CD4-positive, alpha-beta T cell (primary cell): ENCODE measurements at regions of chr12 and their contacts with region 1.

Region 1: GRCh38 chr12:52645120-52645761 is 6.8 kb downstream of the KRT2 start:
- DNase-seq: peak; percentile 29 to 91 (median 50)
- ATAC-seq: peak; percentile 89
- H3K4me3 ChIP-seq: no peak overlapping the region
- H3K4me3 Mint-ChIP-seq: peak overlapping the region; percentile 77
- H3K27ac ChIP-seq: peak overlapping the region; percentile 44 to 75
- H3K27ac Mint-ChIP-seq: peak overlapping the region; percentile 99
- H3K4me1 ChIP-seq: peaks cover 76% of the 10 kb centered on the region
- H3K4me1 Mint-ChIP-seq: peaks cover 92% of the 10 kb centered on the region
- H3K27me3 ChIP-seq: no peaks in the 10 kb centered on the region
- H3K27me3 Mint-ChIP-seq: no peaks in the 10 kb centered on the region
- CTCF ChIP-seq: no peak

Region 2: DNA sequence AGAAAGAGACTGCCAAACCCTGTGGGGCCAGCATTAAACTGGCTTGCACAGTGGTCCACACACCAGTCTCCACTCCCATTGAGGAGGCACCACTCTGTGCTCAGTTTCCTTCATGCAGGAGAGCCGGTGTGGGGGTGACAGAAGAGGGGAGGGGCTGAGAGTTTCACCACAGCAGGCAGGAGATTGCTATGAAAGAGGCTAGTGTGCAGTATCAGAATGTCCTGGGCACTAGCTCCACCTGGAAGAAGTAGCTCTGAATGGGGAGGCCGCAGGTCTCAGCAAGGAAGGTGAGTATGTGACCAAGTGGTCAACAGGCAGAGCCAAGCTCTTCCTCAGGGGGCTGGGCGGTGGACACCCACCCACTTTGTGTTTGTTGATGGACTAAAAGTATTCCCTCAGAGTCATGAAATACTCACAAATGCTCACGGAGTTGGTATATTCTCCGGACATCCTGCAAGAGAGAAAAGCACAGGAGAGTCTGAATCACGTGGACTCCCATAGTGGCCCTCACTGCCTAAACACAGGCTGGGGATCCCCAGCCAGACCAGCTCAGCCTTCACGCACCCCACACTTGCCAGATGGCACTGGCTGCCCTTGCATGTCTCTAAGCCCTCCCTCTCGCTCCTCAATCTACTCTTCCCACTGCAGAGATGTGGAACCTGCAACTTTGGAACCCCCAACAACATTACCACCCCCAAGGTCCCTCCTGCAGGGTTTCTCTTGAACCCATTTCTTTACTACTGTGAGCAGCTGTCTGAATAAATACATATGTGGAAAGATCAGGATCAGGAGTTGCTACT is 36.2 kb before region 1 on chr12:
- CTCF ChIA-PET with region 1: no interaction called
- POLR2A ChIA-PET with region 1: interaction called, 50 read pairs
- intact Hi-C with region 1: loop called (anchors 1 to 2 kb)
- DNase-seq: peak in 2 of 14 experiments; percentile 20 to 46
- ATAC-seq: no peak
- H3K4me3 ChIP-seq: no peak overlapping the region
- H3K4me3 Mint-ChIP-seq: peak overlapping the region; percentile 40
- H3K27ac ChIP-seq: peak overlapping the region in 1 of 2 donors; percentile 38
- H3K27ac Mint-ChIP-seq: peak overlapping the region; percentile 89
- H3K4me1 ChIP-seq: peaks cover 84% of the 10 kb centered on the region
- H3K4me1 Mint-ChIP-seq: peaks cover 97% of the 10 kb centered on the region
- H3K27me3 ChIP-seq: no peaks in the 10 kb centered on the region
- H3K27me3 Mint-ChIP-seq: no peaks in the 10 kb centered on the region
- CTCF ChIP-seq: no peak

Region 3: GRCh38 chr12:52634266-52635056 is 10.8 kb before region 1 on chr12:
- CTCF ChIA-PET with region 1: no interaction called
- POLR2A ChIA-PET with region 1: interaction called, 22 read pairs
- intact Hi-C with region 1: loop called in 1 of 2 experiments (anchors 1 kb)
- DNase-seq: no peak
- ATAC-seq: no peak
- H3K4me3 ChIP-seq: no peak overlapping the region
- H3K4me3 Mint-ChIP-seq: peak overlapping the region; percentile 30
- H3K27ac ChIP-seq: no peak overlapping the region
- H3K27ac Mint-ChIP-seq: peak overlapping the region; percentile 89
- H3K4me1 ChIP-seq: peaks cover 55% of the 10 kb centered on the region
- H3K4me1 Mint-ChIP-seq: peaks cover 66% of the 10 kb centered on the region
- H3K27me3 ChIP-seq: no peaks in the 10 kb centered on the region
- H3K27me3 Mint-ChIP-seq: no peaks in the 10 kb centered on the region
- CTCF ChIP-seq: no peak

Region 4: GRCh38 chr12:52691076-52691840 is 46.0 kb after region 1 on chr12:
- CTCF ChIA-PET with region 1: no interaction called
- POLR2A ChIA-PET with region 1: interaction called, 7 read pairs
- intact Hi-C with region 1: loop called in 1 of 2 experiments (anchors 2 kb)
- DNase-seq: peak; percentile 43 to 77 (median 64)
- ATAC-seq: peak; percentile 87
- H3K4me3 ChIP-seq: peak overlapping the region; percentile 55
- H3K4me3 Mint-ChIP-seq: peak overlapping the region; percentile 83
- H3K27ac ChIP-seq: no peak overlapping the region
- H3K27ac Mint-ChIP-seq: peak overlapping the region; percentile 87
- H3K4me1 ChIP-seq: peaks cover 32% of the 10 kb centered on the region
- H3K4me1 Mint-ChIP-seq: peaks cover 64% of the 10 kb centered on the region
- H3K27me3 ChIP-seq: no peaks in the 10 kb centered on the region
- H3K27me3 Mint-ChIP-seq: no peaks in the 10 kb centered on the region
- CTCF ChIP-seq: no peak

Region 5: DNA sequence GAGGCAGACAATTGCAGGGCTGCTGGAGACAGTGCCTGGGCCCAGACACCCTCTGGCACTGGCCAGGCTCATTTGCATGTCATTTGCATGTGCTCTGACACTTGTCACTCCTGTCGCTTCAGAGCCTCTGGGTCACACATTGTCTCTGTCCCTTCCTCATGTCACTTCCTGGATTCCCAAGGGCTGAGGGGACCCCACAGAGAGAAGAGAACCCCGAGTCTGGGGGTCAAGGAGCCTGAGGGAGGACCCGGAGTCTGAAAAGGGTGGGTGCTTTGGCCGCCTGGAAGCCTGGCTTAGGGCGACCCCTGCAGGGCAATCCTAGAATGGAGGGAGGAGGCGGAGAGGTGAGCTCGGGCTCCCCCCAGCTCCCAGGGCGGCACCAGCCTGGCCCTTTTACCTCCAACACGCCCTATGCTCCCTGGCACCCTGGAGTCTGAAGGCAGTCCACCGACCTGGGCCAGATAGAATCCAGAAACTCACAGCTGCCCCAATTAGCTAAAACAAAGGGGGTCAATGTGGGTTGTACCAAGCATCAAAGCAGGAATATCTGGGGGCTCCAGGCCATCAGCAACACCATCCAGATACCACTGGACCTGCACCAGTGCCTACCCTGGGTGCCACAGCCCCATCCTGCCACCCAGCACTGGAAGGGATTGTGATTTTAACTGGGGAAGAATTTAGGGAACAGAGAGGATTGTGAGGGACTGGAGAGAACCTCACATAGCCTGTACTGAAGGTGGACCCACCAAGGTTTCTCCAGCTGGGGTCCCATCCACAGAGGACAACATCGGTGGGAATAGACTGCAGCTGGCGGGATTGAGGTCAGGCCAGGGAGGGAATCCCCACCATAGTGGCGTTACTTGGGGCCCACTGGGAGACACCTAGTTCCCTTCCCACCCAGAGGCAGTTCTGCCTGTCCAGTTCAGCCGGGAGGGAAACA is 225.4 kb after region 1 on chr12:
- CTCF ChIA-PET with region 1: interaction called, 3 read pairs
- POLR2A ChIA-PET with region 1: no interaction called
- intact Hi-C with region 1: loop called in 1 of 2 experiments (anchors 1 kb)
- DNase-seq: peak; percentile 70 to 85 (median 78)
- ATAC-seq: peak; percentile 69
- H3K4me3 ChIP-seq: no peak overlapping the region
- H3K4me3 Mint-ChIP-seq: no peak overlapping the region
- H3K27ac ChIP-seq: no peak overlapping the region
- H3K27ac Mint-ChIP-seq: peak overlapping the region; percentile 33
- H3K4me1 ChIP-seq: peaks cover 39% of the 10 kb centered on the region
- H3K4me1 Mint-ChIP-seq: peaks cover 50% of the 10 kb centered on the region
- H3K27me3 ChIP-seq: peaks cover 0 to 9% of the 10 kb centered on the region in 2 experiments
- H3K27me3 Mint-ChIP-seq: peaks cover 10% of the 10 kb centered on the region
- CTCF ChIP-seq: peak; percentile 71